ENCODE measurements at regions of chr10 and their contacts with region 1.

Region 1: DNA sequence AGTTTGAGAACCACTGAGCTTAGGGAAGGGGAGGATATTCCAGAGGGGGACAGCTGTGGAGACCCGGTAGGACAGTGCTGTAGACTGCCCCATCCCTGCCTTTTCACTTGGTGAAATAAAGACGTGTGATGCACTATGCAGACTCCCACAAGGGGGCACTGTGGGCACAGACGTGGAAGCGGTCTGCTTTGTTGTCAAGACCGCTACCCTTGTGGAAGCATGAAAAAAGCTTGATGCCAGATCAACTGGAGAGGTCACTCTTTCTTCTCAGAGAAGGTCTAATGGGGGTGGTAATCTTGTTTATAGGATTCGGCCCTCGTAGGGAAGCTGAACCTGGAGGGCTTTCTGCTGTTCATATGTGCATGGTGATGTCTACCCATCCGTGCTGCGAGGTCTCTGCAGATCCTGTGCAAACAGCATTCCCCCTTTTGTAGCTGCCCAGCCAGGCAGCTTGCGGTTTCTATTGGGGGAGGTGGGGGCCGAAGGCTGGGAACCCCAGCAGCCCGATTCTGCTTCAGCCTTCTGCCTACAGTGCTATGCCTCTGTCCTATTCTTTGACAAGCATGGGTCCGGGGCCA is 13.7 kb downstream of the RPS24 start:
- DNase-seq: peak; percentile 65
- CTCF ChIP-seq: peak; percentile 90

Region 2: DNA sequence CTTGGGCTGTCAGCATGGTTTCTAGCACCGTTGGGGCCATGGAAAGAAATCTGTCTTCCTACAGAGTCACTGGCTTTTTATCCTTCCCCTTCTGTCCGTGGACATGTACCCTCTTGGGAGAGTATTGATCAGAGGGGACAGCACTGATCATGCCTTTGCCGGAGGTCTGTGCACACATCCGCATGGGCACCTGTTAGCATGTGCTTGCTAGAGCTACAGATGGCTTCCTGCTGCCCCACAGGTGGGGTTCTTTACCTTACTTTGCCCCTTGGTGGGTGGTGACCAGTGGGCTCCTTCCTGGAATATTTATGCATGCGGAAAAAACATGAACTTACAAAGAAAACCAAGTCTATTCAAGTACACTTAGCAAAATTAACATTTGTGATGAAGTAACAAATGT is 11.2 kb after region 1 on chr10:
- CTCF ChIA-PET with region 1: interaction called, 17 read pairs
- POLR2A ChIA-PET with region 1: no interaction called
- DNase-seq: no peak
- CTCF ChIP-seq: no peak

Region 3: DNA sequence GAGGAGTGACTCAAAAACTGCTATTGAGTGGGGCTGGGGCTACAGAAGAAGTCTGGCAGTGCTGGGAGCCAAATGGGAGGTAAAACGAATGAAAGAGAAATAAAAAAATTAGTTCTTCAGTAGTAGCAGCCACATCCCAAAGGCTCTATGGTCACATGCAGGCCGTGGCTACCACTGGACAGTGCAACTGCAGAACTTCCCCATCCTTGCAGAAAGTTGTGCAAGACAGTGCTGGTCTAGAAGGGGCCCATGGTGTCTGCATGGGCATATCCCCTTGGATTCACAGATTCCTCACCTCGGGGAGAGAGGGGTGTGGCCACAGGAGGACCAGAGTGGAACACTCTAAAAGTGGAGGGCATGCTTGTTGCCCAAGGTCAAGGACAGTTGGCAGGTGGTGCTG is 33.9 kb after region 1 on chr10:
- CTCF ChIA-PET with region 1: no interaction called
- POLR2A ChIA-PET with region 1: no interaction called
- DNase-seq: no peak
- CTCF ChIP-seq: no peak

Region 4: GRCh38 chr10:78657163-78657861 is 609.9 kb after region 1 on chr10:
- CTCF ChIA-PET with region 1: interaction called, 13 read pairs
- POLR2A ChIA-PET with region 1: no interaction called
- DNase-seq: peak; percentile 76
- CTCF ChIP-seq: peak; percentile 68

Region 5: GRCh38 chr10:79202188-79203013 is 1155.0 kb after region 1 on chr10:
- CTCF ChIA-PET with region 1: interaction called, 102 read pairs
- POLR2A ChIA-PET with region 1: no interaction called
- DNase-seq: peak; percentile 65
- CTCF ChIP-seq: peak; percentile 55

Measured in GM10248 (cell line).